H1 (cell line): ENCODE measurements at regions of chr9 and their contacts with region 1.

Region 1: GRCh38 chr9:23088932-23089366 is 642.3 kb downstream of the DMRTA1 start:
- DNase-seq: peak; percentile 71 to 78
- H3K4me3 ChIP-seq: no peak overlapping the region
- H3K27ac ChIP-seq: no peak overlapping the region
- H3K4me1 ChIP-seq: peaks cover 0 to 3% (median 2%) of the 10 kb centered on the region in 4 experiments; a peak in 2 of 7 replicates
- H3K27me3 ChIP-seq: no peaks in the 10 kb centered on the region
- CTCF ChIP-seq: peak; percentile 77 to 86 (median 79)
- EP300 ChIP-seq: no peak
- POLR2A ChIP-seq: no peak
- RAD21 ChIP-seq: peak; percentile 91 to 95

Region 2: GRCh38 chr9:22815246-22815645 is 273.7 kb before region 1 on chr9:
- CTCF ChIA-PET with region 1: interaction called, 12 read pairs
- POLR2A ChIA-PET with region 1: no interaction called
- DNase-seq: no peak
- H3K4me3 ChIP-seq: no peak overlapping the region
- H3K27ac ChIP-seq: no peak overlapping the region
- H3K4me1 ChIP-seq: no peaks in the 10 kb centered on the region
- H3K27me3 ChIP-seq: no peaks in the 10 kb centered on the region
- CTCF ChIP-seq: no peak
- EP300 ChIP-seq: no peak
- POLR2A ChIP-seq: no peak
- RAD21 ChIP-seq: no peak

Region 3: GRCh38 chr9:23220957-23221356 is 132.0 kb after region 1 on chr9:
- CTCF ChIA-PET with region 1: no interaction called
- POLR2A ChIA-PET with region 1: no interaction called
- DNase-seq: no peak
- H3K4me3 ChIP-seq: no peak overlapping the region
- H3K27ac ChIP-seq: no peak overlapping the region
- H3K4me1 ChIP-seq: no peaks in the 10 kb centered on the region
- H3K27me3 ChIP-seq: no peaks in the 10 kb centered on the region
- CTCF ChIP-seq: no peak
- EP300 ChIP-seq: no peak
- POLR2A ChIP-seq: no peak
- RAD21 ChIP-seq: no peak